PC-9 (cell line): ENCODE measurements at regions of chr1 and their contacts with region 1.

Region 1: DNA sequence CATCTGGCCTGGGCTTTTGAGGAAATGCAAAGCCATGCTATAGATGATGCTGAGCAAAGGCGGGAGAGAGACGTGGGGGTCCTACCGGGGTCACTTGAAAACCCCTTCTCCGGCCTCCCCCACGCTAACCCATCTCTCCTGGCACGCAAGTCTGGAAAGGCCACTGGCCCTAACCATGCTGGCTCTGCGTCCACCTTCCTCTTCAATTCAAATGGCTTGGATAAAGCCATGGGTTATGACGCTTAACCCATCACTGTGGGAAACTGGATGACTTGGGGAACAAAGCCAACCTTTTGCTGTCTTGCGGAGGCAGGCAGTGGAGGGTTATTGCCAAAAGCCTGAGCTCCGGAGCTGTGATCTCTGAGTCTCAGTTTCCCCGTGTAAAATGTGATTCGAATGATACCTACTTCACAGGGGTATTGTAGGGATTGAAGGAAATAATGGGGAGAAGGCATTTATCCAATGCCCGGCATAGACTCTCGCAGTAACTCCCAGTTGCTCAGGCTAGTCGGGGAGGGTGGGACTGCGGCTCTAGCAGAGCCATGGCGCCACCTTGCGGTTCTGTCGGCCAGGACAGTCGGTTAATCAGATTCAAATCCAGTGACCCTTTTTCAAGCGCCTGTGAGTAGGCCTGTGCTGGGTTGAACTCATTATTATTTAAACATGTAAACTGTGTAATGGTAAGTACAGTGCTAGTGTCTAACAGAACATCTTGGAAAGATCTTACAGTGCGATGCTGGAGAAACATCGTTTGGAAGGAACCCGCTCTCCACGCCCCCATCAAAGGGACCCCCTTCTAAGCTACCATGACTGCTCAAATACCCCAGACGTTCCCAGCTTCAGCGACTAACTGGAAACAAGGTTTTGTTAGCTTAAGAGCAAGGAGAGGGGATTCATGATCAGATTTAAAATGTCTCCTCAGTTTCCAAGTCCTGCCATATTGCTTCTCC is 20.3 kb downstream of the NEK2 start:
- DNase-seq: peak; percentile 69 to 85
- H3K4me3 ChIP-seq: no peak overlapping the region
- H3K27ac ChIP-seq: peak overlapping the region; percentile 94
- H3K4me1 ChIP-seq: peaks cover 33% of the 10 kb centered on the region
- H3K27me3 ChIP-seq: no peaks in the 10 kb centered on the region
- CTCF ChIP-seq: peak; percentile 94

Region 2: GRCh38 chr1:210448297-210448892 is 1206.7 kb before region 1 on chr1:
- CTCF ChIA-PET with region 1: no interaction called
- POLR2A ChIA-PET with region 1: no interaction called
- intact Hi-C with region 1: loop called (anchors 10 kb)
- DNase-seq: peak; percentile 19 to 37
- H3K4me3 ChIP-seq: no peak overlapping the region
- H3K27ac ChIP-seq: no peak overlapping the region
- H3K4me1 ChIP-seq: peaks cover 11% of the 10 kb centered on the region; the same call in 1 of the 2 replicates
- H3K27me3 ChIP-seq: no peaks in the 10 kb centered on the region
- CTCF ChIP-seq: peak; percentile 79

Region 3: GRCh38 chr1:210584439-210585113 is 1070.5 kb before region 1 on chr1:
- CTCF ChIA-PET with region 1: no interaction called
- POLR2A ChIA-PET with region 1: no interaction called
- intact Hi-C with region 1: loop called (anchors 5 kb)
- DNase-seq: peak; percentile 64 to 79
- H3K4me3 ChIP-seq: no peak overlapping the region
- H3K27ac ChIP-seq: no peak overlapping the region
- H3K4me1 ChIP-seq: no peaks in the 10 kb centered on the region
- H3K27me3 ChIP-seq: no peaks in the 10 kb centered on the region
- CTCF ChIP-seq: peak; percentile 88

Region 4: GRCh38 chr1:211323156-211324063 is 331.7 kb before region 1 on chr1:
- CTCF ChIA-PET with region 1: interaction called, 3 read pairs
- POLR2A ChIA-PET with region 1: no interaction called
- intact Hi-C with region 1: loop called (anchors 1 kb)
- DNase-seq: peak in 1 of 2 experiments; percentile 59
- H3K4me3 ChIP-seq: no peak overlapping the region
- H3K27ac ChIP-seq: no peak overlapping the region
- H3K4me1 ChIP-seq: peaks cover 9% of the 10 kb centered on the region
- H3K27me3 ChIP-seq: no peaks in the 10 kb centered on the region
- CTCF ChIP-seq: peak; percentile 89

Region 5: GRCh38 chr1:211637066-211637465 is 18.0 kb before region 1 on chr1:
- CTCF ChIA-PET with region 1: interaction called, 11 read pairs
- POLR2A ChIA-PET with region 1: no interaction called
- intact Hi-C with region 1: no loop called
- DNase-seq: no peak
- H3K4me3 ChIP-seq: no peak overlapping the region
- H3K27ac ChIP-seq: peak overlapping the region; percentile 95
- H3K4me1 ChIP-seq: peaks cover 75% of the 10 kb centered on the region
- H3K27me3 ChIP-seq: no peaks in the 10 kb centered on the region
- CTCF ChIP-seq: no peak

Region 6: DNA sequence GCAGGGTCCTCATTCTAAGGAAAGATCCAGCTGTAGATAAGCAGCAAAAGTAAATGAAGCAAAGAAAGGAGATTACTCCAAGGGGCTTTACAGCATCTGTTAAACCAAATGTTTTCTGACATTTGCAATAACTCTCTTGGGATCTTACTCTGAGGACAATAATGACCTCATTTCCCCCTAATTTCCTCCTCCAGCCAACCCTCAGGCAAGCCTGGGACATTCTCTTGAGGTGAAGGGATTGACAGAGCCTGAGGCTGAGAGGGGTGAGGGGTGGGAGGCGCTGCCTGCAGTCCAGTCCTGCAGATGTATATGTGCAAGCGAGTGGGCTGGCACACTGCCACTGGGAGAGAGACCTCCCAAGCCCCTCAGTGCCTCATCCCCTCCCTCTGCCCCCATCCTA is 60.9 kb after region 1 on chr1:
- CTCF ChIA-PET with region 1: no interaction called
- POLR2A ChIA-PET with region 1: no interaction called
- intact Hi-C with region 1: no loop called
- DNase-seq: no peak
- H3K4me3 ChIP-seq: no peak overlapping the region
- H3K27ac ChIP-seq: no peak overlapping the region
- H3K4me1 ChIP-seq: no peaks in the 10 kb centered on the region
- H3K27me3 ChIP-seq: no peaks in the 10 kb centered on the region
- CTCF ChIP-seq: no peak